Mammary epithelial cell (primary cell): ENCODE measurements at regions of chr7 and their contacts with region 1.

Region 1: DNA sequence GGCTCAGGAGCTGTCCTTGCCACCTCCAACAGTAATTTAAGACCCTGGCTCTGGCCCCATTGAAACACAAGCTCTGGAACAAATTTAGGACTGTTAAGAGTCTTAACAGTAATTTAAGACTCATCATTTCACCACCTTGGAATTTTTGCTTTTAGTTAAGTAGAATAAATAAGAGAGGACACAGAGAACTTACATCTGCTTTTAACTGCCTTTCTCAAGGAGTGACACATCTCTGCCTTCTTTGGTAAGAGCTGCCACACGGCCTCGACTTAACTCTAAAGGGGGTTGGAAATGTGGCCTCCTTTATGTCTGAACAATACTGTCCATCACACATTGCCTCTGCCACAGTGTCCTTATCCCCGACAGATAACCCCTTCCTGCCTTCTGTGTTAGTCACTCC is 77.9 kb downstream of the HERPUD2 start:
- DNase-seq: no peak
- H3K4me3 ChIP-seq: no peak overlapping the region
- H3K27ac ChIP-seq: no peak overlapping the region
- H3K4me1 ChIP-seq: no peaks in the 10 kb centered on the region
- H3K27me3 ChIP-seq: no peaks in the 10 kb centered on the region
- CTCF ChIP-seq: no peak

Region 2: GRCh38 chr7:36207451-36208291 is 590.6 kb after region 1 on chr7:
- CTCF ChIA-PET with region 1: no interaction called
- dilution Hi-C with region 1: loop called (anchors 10 kb)
- in situ Hi-C with region 1: no loop called
- intact Hi-C with region 1: no loop called
- DNase-seq: peak; percentile 25
- H3K4me3 ChIP-seq: no peak overlapping the region
- H3K27ac ChIP-seq: no peak overlapping the region
- H3K4me1 ChIP-seq: peaks cover 7% of the 10 kb centered on the region
- H3K27me3 ChIP-seq: no peaks in the 10 kb centered on the region
- CTCF ChIP-seq: no peak

Region 3: DNA sequence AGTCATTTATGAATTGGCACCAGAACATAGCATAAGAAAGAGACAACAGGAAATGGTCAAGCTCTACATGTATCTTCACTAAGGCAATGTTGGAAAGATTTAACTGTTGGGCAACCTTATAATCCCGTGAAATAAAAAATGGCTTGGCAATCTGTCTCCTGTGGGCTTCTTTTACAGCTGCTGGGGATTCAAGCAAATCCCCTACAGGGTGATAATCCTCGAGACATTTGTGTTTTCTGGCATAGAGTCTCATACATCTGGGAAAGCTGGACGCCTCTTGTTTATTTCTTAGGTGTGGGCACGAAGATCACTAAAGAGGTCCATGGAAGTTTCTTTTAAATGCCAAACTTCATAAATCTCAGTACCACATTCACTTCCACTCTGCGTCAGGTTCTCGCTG is 1984.3 kb after region 1 on chr7:
- CTCF ChIA-PET with region 1: no interaction called
- dilution Hi-C with region 1: no loop called
- in situ Hi-C with region 1: no loop called
- intact Hi-C with region 1: loop called (anchors 10 kb)
- DNase-seq: no peak
- H3K4me3 ChIP-seq: no peak overlapping the region
- H3K27ac ChIP-seq: no peak overlapping the region
- H3K4me1 ChIP-seq: no peaks in the 10 kb centered on the region
- H3K27me3 ChIP-seq: peaks cover 2% of the 10 kb centered on the region
- CTCF ChIP-seq: no peak